Left cardiac atrium (tissue), 4 donors: ENCODE measurements at regions of chr12 and their contacts with region 1.

Region 1: DNA sequence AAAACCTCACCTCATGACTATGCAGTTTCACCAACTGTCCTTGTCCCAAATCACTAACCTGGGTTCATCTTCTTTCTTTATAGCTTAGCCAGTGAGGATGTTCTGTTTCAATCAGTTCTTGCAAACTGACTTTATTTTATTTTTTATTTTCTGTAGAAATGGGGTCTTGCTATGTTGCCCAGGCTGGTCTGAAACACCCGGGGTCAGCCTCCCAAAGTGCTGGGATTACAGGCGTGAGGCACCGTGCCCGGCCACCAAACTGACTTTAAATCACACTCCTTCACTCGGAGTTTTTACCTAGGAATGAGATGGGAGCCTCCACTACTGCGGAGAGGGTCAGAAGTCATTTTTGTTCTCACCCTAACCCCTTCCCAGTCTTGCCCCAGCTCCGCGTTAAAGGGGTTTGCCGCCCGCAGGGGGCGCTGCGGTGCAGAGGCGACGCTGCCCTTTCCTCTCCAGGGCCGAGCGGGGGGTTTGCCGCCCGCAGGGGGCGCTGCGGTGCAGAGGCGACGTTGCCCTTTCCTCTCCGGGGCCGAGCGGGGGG is 7.0 kb upstream of the B4GALNT3 start:
- DNase-seq: no peak
- ATAC-seq: peak in 1 of 2 donors; percentile 9

Region 2: GRCh38 chr12:56683-57346 is 395.9 kb before region 1 on chr12:
- intact Hi-C with region 1: no loop called
- DNase-seq: no peak
- ATAC-seq: peak in 1 of 2 donors; percentile 21

Region 3: GRCh38 chr12:273382-273781 is 179.4 kb before region 1 on chr12:
- intact Hi-C with region 1: no loop called
- DNase-seq: no peak
- ATAC-seq: no peak

Region 4: DNA sequence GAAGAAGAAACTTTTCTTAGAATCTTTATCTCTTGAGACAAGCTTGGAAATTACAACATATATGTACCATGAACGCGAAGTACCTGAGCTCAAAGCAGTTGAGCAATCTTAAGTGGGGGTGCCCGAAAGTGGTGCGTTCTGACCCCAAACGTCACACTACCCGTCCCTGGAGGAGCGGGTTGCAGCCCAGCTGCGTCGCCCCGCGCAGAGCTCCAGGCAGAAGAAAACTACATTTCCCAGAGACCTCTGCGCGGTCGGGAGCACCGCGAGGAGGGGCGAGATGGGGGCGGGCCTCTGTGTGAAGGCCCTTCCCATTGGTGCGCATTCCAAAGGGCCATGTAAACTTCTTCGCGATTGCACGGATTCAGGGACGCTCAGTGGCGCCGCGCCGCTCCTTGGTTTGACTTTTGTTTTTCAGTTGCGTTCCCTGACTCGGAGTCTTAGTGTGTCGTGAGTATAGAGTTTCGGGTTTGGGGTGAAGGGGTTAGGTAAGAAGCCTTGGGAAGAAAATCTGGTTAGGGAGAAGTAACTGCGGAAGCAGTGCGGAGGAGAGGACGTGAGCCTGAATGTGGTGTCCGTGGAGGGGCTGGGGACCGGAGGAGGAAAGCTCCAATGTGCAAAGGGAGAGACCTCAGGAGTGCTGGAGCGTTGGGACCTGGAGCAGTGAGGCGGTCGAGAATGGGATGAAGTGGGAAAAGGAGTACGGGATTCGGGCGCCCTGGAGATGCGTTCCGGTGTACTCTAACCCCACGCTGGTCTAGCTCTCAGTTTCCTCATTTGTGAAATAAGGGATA is 51.3 kb before region 1 on chr12 and contains the start of gene CCDC77:
- intact Hi-C with region 1: no loop called
- DNase-seq: peak; percentile 89
- ATAC-seq: peak; percentile 100
- total RNA-seq, gene CCDC77: 2.9 to 5.0 TPM

Region 5: GRCh38 chr12:546921-547845 is 94.4 kb after region 1 on chr12:
- intact Hi-C with region 1: loop called (anchors 2 to 5 kb)
- DNase-seq: peak; percentile 72
- ATAC-seq: peak; percentile 69 to 78

Region 6: DNA sequence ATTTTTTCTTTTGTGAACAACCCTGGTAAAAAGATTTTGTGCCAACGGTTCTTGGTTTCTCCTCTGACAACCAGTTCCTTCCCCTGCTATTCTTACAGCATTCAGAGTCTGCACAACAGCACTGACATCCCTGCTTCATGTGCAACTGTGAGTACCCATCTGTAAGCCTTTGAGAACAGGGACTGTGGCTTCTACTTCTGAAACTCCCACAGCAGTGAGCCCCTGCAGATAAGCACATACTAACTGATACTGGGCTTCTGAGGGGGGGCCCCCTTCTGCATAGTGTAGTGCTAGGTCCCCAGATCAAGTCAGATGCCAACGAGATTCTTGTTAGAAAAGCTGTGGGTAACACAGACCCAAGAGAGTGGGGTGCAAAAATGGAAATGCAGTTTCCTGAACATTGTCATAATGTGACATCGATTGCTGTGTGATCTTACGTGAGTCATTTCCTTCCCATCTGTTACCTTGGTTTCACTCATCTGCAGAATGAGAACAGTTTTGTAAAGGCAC is 221.6 kb after region 1 on chr12:
- intact Hi-C with region 1: no loop called
- DNase-seq: no peak
- ATAC-seq: peak; percentile 24 to 68